Activated CD4-positive, alpha-beta T cell treated with anti-CD3 and anti-CD28 coated beads, Interleukin-2, amount 10 ng/mL, durations not matched to agents 7 days and 5 days (primary cell): ENCODE measurements at regions of chr14 and their contacts with region 1.

Region 1: GRCh38 chr14:21014761-21015190 is 10.1 kb downstream of the NDRG2 start:
- DNase-seq: peak; percentile 83
- H3K4me3 Mint-ChIP-seq: no peak overlapping the region
- H3K27ac Mint-ChIP-seq: no peak overlapping the region
- H3K4me1 Mint-ChIP-seq: no peaks in the 10 kb centered on the region
- H3K27me3 Mint-ChIP-seq: peaks cover 21% of the 10 kb centered on the region

Region 2: DNA sequence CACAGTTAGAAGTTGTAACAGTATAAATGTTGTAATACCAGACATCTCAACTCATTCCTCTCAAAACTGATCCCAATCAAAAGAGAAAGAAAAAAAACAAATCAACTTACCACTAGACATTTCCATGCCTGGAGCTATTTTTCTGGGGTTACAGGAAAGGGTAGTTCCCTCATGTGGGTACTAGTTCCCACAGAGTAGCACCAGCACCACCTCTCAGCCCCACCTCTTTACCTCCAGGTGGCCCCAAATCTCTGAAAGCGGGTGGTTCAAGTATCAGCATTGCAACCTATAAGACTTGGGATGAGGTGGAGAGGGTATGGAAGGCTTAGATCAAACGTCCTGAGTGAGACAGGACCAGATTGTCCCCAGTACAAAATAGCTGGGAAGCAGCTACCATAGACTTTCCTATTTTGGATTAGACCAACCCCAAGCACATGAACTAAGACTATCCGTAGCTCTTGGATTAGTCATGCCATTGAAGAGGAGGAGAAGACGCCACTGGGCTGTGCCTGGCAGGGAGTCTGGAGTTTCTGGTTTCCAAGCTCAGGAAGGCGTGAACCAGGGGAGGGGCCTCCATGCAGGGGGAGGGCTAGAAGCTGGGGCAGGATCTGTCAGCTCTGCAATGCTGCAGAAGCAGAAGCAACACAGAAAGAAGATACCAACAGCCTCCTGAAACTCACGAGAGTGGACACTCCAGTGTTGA is 16.0 kb before region 1 on chr14 and contains the start of gene SLC39A2:
- CTCF ChIA-PET with region 1: interaction called, 14 read pairs
- POLR2A ChIA-PET with region 1: no interaction called
- DNase-seq: no peak
- H3K4me3 Mint-ChIP-seq: no peak within 1 kb of the TSS
- H3K27ac Mint-ChIP-seq: no peak within 1 kb of the TSS
- H3K4me1 Mint-ChIP-seq: peaks cover 19% of the 10 kb centered on the region
- H3K27me3 Mint-ChIP-seq: no peaks in the 10 kb centered on the region
- total RNA-seq, gene SLC39A2: 0.25 to 0.37 TPM

Region 3: GRCh38 chr14:21003788-21004346 is 10.9 kb before region 1 on chr14:
- CTCF ChIA-PET with region 1: interaction called, 14 read pairs
- POLR2A ChIA-PET with region 1: no interaction called
- DNase-seq: no peak
- H3K4me3 Mint-ChIP-seq: no peak overlapping the region
- H3K27ac Mint-ChIP-seq: no peak overlapping the region
- H3K4me1 Mint-ChIP-seq: no peaks in the 10 kb centered on the region
- H3K27me3 Mint-ChIP-seq: no peaks in the 10 kb centered on the region

Region 4: DNA sequence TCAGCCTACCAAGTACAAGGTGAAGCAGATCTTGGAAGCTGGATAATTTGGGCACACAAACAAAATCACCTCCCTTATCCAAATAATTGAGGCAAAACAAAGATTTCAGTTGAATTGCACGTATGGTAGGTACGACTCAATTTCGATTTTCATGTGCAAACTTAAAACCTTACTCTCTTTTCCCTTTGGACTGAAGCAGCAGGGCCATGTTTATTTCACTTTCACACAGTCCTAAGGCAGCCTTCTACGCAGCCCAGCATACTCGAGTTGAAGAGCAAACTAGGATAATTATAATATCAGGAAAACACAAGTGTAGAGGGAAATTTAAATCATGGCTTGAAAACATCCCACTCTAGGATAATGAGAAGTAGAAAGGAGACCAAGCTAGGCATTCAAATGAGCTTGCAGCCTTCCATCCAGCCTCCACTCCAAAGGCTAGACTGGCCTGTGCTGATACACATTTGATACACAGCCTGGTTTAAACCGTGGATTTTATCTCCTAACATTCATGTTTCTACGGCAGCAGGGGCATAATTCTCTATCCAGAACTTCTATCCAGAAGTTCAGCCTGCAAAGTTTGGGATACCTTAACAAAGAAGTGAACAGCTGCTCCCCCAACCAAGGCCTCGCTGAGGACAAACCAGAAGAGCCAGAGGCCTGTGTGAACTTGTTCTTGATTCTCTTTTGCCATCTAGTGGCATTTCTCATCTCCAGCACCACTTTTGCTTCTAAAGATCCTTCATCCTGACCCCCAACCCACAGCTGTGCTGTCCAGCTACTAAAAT is 25.0 kb after region 1 on chr14:
- CTCF ChIA-PET with region 1: interaction called, 30 read pairs
- POLR2A ChIA-PET with region 1: no interaction called
- DNase-seq: peak; percentile 32
- H3K4me3 Mint-ChIP-seq: no peak overlapping the region
- H3K27ac Mint-ChIP-seq: no peak overlapping the region
- H3K4me1 Mint-ChIP-seq: peaks cover 5% of the 10 kb centered on the region
- H3K27me3 Mint-ChIP-seq: peaks cover 12% of the 10 kb centered on the region

Region 5: GRCh38 chr14:21103710-21104447 is 89.1 kb after region 1 on chr14:
- CTCF ChIA-PET with region 1: interaction called, 92 read pairs
- POLR2A ChIA-PET with region 1: interaction called, 3 read pairs
- DNase-seq: peak; percentile 97
- H3K4me3 Mint-ChIP-seq: peak overlapping the region; percentile 87
- H3K27ac Mint-ChIP-seq: peak overlapping the region; percentile 93
- H3K4me1 Mint-ChIP-seq: peaks cover 44% of the 10 kb centered on the region
- H3K27me3 Mint-ChIP-seq: peaks cover 7% of the 10 kb centered on the region

Region 6: GRCh38 chr14:21229821-21230220 is 215.0 kb after region 1 on chr14:
- CTCF ChIA-PET with region 1: no interaction called
- POLR2A ChIA-PET with region 1: no interaction called
- DNase-seq: peak; percentile 24
- H3K4me3 Mint-ChIP-seq: peak overlapping the region; percentile 39
- H3K27ac Mint-ChIP-seq: peak overlapping the region; percentile 88
- H3K4me1 Mint-ChIP-seq: peaks cover 72% of the 10 kb centered on the region
- H3K27me3 Mint-ChIP-seq: no peaks in the 10 kb centered on the region